ENCODE measurements at regions of chr4 and their contacts with region 1.

Region 1: DNA sequence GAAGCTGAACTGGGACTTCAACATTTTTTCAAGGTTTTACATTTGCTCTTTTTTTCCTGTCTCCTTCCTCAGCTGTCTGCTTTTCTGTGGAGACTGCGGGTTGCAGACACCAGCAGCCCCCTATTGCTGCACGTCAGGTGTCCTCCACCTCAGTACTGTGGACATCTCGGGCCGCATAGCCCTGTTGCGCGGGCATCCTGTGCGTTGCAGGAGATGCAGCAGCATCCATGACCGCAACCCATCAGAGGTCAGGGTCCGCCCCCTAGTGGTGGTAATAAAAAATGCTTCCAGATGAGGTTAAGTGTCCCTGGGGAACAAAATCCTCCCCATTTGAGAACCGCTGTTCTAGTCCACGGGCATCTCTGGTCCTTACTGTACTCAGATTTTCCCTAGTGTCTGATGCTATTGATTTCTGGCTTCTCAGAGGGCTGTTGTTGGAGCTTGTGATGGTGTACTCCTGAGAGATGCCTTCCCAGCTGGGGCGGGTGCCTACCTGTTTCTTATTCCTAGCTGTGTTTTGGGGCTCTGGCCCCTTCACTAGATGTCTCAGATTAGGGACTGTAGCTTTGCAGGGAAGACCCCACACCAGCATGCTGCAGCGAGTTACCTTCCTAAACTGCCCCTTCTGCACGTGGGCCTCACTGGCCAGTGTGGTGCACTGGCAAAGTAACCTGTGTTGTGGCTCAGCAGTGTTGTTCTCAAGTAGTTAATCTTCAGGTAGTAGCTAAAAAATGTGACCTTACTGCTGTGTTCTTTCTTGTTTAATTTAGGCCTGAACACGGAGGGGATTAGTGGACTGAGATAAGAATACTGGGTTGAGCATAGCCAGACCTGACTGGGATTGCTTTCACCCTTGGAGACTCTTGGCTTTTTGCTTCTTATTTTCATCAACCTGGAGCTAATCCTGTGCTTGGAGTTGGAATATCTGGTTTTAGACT is 28.2 kb downstream of the NSD2 start:
- DNase-seq: peak; percentile 51 to 75
- ATAC-seq: peak; percentile 82 to 92 (median 90)
- H3K4me3 ChIP-seq: no peak overlapping the region
- H3K27ac ChIP-seq: no peak overlapping the region
- H3K4me1 ChIP-seq: peaks cover 0 to 13% (median 6%) of the 10 kb centered on the region in 9 donors
- H3K27me3 ChIP-seq: no peaks in the 10 kb centered on the region
- CTCF ChIP-seq: peak; percentile 79 to 96 (median 89)

Region 2: DNA sequence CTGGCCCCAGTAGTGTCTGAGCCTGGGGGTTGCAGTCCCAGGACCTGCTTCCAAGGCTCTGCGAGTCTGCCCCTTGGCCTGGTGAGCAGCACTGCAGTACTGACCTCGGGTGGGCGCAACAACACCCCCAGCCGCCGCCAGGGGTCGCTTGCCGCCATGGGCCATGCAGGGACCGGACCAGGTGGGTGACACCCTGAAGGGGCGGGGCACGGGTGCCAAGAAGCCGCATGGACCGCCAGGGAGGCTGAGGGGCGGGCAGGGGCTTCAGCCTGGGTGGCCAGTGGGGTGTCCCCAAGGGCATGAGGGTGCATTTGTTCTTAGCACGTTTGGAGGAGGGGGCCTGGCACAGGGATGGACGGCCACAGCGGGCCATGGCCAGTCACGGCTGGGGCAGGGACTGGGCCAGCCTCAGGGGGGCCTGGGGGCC is 153.1 kb before region 1 on chr4:
- intact Hi-C with region 1: loop called (anchors 2 to 5 kb)
- DNase-seq: peak; percentile 63 to 77
- ATAC-seq: peak; percentile 60 to 83 (median 68)
- H3K4me3 ChIP-seq: no peak overlapping the region
- H3K27ac ChIP-seq: no peak overlapping the region
- H3K4me1 ChIP-seq: peaks cover 0 to 7% (median 4%) of the 10 kb centered on the region in 9 donors
- H3K27me3 ChIP-seq: peaks cover 0 to 11% (median 7%) of the 10 kb centered on the region in 7 donors
- CTCF ChIP-seq: peak; percentile 69 to 86 (median 79)

Region 3: GRCh38 chr4:1752284-1753041 is 147.0 kb before region 1 on chr4:
- intact Hi-C with region 1: loop called (anchors 2 to 5 kb)
- DNase-seq: no peak
- ATAC-seq: peak in 4 of 8 donors; percentile 9 to 24 (median 18)
- H3K4me3 ChIP-seq: peak overlapping the region in 2 of 10 donors; percentile 8 to 20
- H3K27ac ChIP-seq: peak overlapping the region in 2 of 10 donors; percentile 10 to 44
- H3K4me1 ChIP-seq: peaks cover 0 to 23% (median 14%) of the 10 kb centered on the region in 9 donors
- H3K27me3 ChIP-seq: peaks cover 0 to 11% (median 7%) of the 10 kb centered on the region in 7 donors
- CTCF ChIP-seq: no peak

Region 4: GRCh38 chr4:1809754-1810511 is 89.5 kb before region 1 on chr4:
- intact Hi-C with region 1: loop called in 2 of 10 experiments (anchors 10 kb)
- DNase-seq: peak; percentile 59 to 69
- ATAC-seq: peak; percentile 63 to 88 (median 80)
- H3K4me3 ChIP-seq: no peak overlapping the region
- H3K27ac ChIP-seq: no peak overlapping the region
- H3K4me1 ChIP-seq: no peaks in the 10 kb centered on the region
- H3K27me3 ChIP-seq: no peaks in the 10 kb centered on the region
- CTCF ChIP-seq: peak; percentile 64 to 93 (median 79)

Region 5: DNA sequence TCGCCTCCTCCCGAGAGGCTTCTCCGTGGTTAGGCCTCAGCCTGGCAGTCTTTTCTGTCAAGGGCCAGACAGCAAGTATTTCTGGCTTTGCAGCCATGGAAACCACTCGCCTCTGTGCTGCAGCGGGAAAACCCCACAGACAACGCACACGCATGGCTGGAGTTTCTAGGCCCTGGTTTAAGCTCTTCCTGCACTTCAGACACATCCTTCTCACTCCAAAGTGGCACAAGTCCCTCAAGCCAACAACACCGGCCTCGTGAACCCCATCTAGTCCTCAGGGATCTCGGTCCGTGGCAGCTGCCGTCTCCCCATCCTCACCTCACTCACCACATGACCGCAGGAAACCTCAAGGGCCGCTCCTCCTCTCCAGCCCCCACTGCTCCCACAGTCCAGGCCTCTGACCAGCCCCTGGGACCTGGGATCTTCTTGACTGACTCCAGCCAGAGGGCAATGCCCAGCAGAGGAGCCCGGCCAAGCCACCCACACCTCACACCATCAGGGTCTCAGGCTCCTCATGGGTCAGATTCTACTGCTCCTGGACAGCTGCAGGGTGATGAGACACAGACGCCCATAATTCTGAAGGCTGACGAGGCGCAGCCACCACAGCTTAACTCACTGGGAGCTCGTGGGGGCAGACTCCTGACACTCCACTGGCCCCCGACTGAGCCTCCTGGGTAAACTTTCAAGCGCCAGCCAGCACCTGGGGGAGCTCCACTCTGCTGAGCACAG is 65.2 kb before region 1 on chr4:
- intact Hi-C with region 1: loop called in 1 of 10 experiments (anchors 10 kb)
- DNase-seq: no peak
- ATAC-seq: no peak
- H3K4me3 ChIP-seq: no peak overlapping the region
- H3K27ac ChIP-seq: no peak overlapping the region
- H3K4me1 ChIP-seq: no peaks in the 10 kb centered on the region
- H3K27me3 ChIP-seq: no peaks in the 10 kb centered on the region
- CTCF ChIP-seq: no peak

Region 6: DNA sequence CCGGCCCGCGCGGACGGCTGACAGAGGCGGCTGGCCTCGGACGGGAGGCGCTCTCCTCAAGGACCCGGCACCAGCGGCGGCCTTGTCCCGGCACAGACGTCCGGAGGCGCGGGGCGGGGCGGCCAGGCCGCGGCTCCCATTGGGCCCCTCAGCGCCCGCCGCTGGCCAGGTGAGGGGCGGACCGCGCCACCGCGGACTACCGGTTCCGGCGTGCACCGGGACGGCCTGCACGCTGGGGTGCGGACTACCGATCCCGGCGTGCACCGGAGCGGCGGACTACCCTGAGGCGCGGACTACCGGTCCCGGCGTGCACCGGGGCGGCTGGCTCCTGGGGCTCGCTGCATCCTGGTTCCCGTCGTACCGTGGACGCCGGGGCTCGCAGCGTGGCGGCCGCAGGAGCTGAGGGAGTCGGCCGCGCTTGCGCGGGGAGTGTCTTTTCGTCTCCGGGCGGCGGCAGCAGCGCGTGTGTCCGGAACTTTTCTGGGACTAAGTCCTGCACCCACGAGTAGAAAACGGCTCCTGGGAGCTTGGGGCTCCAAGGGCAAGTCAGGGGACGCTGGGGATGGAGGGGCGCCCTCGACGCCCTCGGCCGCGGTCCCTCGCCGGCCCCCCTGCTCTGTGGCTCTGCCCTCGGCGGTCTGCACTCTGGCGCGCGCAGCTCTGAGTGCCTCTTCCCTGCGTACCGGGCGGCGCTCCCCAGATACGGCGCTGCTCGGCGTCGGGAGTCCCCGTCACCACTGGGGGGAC is 43.2 kb before region 1 on chr4 and contains the start of gene LETM1:
- intact Hi-C with region 1: loop called in 7 of 10 experiments (anchors 1 to 10 kb)
- DNase-seq: peak; percentile 95 to 96
- ATAC-seq: peak; percentile 96 to 98 (median 97)
- H3K4me3 ChIP-seq: peak within 1 kb of the TSS; percentile 68 to 95 (median 82)
- H3K27ac ChIP-seq: peak within 1 kb of the TSS; percentile 78 to 93 (median 86)
- H3K4me1 ChIP-seq: peaks cover 8 to 55% (median 43%) of the 10 kb centered on the region in 9 donors
- H3K27me3 ChIP-seq: no peaks in the 10 kb centered on the region
- CTCF ChIP-seq: peak in 1 of 9 donors; percentile 10
- total RNA-seq, gene LETM1: 35.3 to 53.1 (median 42.6) TPM

Region 7: DNA sequence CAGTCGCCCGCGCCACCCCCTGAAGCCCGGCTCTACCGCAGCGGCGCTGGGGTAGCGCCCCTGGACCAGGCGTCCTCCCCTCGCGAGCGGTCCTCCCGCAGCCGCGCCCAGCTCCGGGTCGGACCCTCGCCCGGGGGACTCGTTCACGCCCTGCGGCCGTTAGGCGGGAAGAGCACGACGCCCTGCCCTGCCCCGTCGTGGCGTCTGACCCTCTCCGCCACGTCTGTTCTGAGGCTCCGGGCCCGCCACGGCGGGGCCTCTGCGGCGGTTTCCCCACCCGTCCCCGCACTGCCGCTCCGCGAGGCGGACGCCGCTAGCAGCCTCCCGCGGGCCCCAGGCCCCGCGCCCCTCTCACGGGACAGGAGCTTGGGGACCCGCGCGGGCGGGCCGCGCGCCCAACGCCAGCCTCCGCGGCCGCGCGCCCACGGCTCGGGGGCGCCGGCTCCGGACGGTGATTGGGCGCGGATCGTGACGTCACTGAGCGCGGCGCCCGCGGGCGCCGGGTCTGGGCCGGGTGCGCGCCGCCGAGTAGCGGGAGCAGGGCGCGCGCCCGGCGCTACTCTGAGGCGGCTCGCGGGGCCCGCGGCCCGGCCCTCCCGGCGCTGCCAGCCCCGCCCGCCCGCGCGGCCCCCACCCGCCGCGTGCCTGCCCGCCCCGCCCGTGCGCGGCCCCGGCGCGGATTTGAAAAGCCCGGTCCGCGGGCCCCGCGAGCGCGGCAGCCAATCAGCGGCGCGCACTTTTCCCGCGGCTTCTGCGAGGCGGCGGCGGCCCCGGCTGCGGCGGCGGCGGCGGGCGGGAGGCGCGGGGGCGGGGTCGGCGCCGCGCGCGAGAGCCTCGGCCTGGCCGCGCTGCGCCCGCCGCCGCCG is 28.6 kb before region 1 on chr4 and contains the start of gene NSD2:
- intact Hi-C with region 1: loop called in 1 of 10 experiments (anchors 1 kb)
- DNase-seq: peak; percentile 89 to 92
- ATAC-seq: peak; percentile 78 to 94 (median 90)
- H3K4me3 ChIP-seq: peak within 1 kb of the TSS; percentile 72 to 98 (median 84)
- H3K27ac ChIP-seq: peak within 1 kb of the TSS; percentile 91 to 100 (median 99)
- H3K4me1 ChIP-seq: peaks cover 0 to 29% (median 21%) of the 10 kb centered on the region in 9 donors
- H3K27me3 ChIP-seq: peaks cover 0 to 15% (median 6%) of the 10 kb centered on the region in 7 donors
- CTCF ChIP-seq: no peak
- total RNA-seq, gene NSD2: 32.3 to 64.4 (median 46.0) TPM

Measured in heart right ventricle (tissue), 16 donors.